Caco-2 (cell line): ENCODE measurements at regions of chr11 and their contacts with region 1.

Region 1: DNA sequence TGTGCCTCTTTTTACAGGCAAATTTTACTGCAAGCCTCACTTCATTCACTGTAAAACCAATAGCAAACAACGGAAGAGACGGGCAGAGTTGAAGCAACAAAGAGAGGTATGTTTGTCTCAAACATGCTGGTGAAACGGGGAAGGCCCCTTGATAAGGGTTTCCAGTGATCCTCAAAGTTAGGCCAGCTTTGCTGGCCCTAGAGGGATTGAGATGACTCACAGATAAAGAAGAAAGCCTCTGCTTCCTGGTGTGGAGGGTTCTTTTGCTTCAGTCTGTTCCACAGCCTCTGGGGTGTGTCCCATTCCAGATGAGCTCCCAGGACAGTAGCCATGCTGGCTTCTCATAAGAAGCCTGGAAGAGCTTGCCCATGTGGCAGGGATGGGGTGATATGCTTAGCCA is 118.9 kb upstream of the PARVA start:
- DNase-seq: peak; percentile 85 to 86
- H3K4me3 ChIP-seq: no peak overlapping the region
- H3K4me3 Mint-ChIP-seq: peak overlapping the region; percentile 42
- H3K27ac Mint-ChIP-seq: peak overlapping the region; percentile 96
- H3K4me1 ChIP-seq: peaks cover 67% of the 10 kb centered on the region
- H3K4me1 Mint-ChIP-seq: peaks cover 70% of the 10 kb centered on the region
- H3K27me3 ChIP-seq: no peaks in the 10 kb centered on the region
- H3K27me3 Mint-ChIP-seq: no peaks in the 10 kb centered on the region
- CTCF ChIP-seq: no peak

Region 2: GRCh38 chr11:12031856-12032544 is 226.5 kb before region 1 on chr11:
- CTCF ChIA-PET with region 1: no interaction called
- POLR2A ChIA-PET with region 1: no interaction called
- intact Hi-C with region 1: no loop called
- DNase-seq: no peak
- H3K4me3 ChIP-seq: no peak overlapping the region
- H3K4me3 Mint-ChIP-seq: no peak overlapping the region
- H3K27ac Mint-ChIP-seq: peak overlapping the region; percentile 63
- H3K4me1 ChIP-seq: peaks cover 9% of the 10 kb centered on the region; the same call in 1 of the 2 replicates
- H3K4me1 Mint-ChIP-seq: peaks cover 20% of the 10 kb centered on the region
- H3K27me3 ChIP-seq: no peaks in the 10 kb centered on the region
- H3K27me3 Mint-ChIP-seq: no peaks in the 10 kb centered on the region
- CTCF ChIP-seq: no peak

Region 3: DNA sequence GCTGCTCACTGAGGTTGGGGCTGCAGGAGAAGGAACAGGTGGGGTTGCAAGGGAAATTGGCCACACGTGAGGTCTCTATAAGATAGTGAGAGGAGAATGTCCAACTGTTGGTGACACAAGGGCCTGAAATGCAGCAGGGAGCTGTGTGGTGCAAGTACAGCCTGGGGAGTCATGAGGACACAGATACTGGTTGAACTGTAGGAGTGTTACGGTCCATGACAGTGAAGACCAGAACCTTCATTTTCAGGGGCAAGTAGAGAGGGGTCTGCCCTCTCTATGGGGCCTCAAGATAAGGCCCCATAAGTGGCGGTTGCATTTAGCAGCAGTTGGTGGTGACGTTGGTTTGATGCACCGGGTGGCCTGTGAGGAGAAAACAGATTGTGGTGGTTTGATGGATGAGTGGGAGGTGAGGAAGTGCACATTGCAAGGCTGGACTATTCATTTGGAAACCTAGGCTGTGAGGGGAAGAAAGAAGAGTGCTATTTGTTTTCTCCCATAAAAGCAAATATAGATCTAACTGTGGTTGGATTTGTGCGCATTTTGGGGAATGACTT is 108.7 kb before region 1 on chr11:
- CTCF ChIA-PET with region 1: no interaction called
- POLR2A ChIA-PET with region 1: no interaction called
- intact Hi-C with region 1: no loop called
- DNase-seq: no peak
- H3K4me3 ChIP-seq: no peak overlapping the region
- H3K4me3 Mint-ChIP-seq: no peak overlapping the region
- H3K27ac Mint-ChIP-seq: peak overlapping the region; percentile 77
- H3K4me1 ChIP-seq: peaks cover 46% of the 10 kb centered on the region
- H3K4me1 Mint-ChIP-seq: peaks cover 33% of the 10 kb centered on the region
- H3K27me3 ChIP-seq: no peaks in the 10 kb centered on the region
- H3K27me3 Mint-ChIP-seq: no peaks in the 10 kb centered on the region
- CTCF ChIP-seq: no peak

Region 4: GRCh38 chr11:12248338-12248737 is 10.1 kb before region 1 on chr11:
- CTCF ChIA-PET with region 1: interaction called, 3 read pairs
- POLR2A ChIA-PET with region 1: interaction called, 3 read pairs
- intact Hi-C with region 1: loop called (anchors 1 kb)
- DNase-seq: peak; percentile 97 to 99
- H3K4me3 ChIP-seq: no peak overlapping the region
- H3K4me3 Mint-ChIP-seq: peak overlapping the region; percentile 58
- H3K27ac Mint-ChIP-seq: peak overlapping the region; percentile 85
- H3K4me1 ChIP-seq: peaks cover 79% of the 10 kb centered on the region
- H3K4me1 Mint-ChIP-seq: peaks cover 43% of the 10 kb centered on the region
- H3K27me3 ChIP-seq: no peaks in the 10 kb centered on the region
- H3K27me3 Mint-ChIP-seq: no peaks in the 10 kb centered on the region
- CTCF ChIP-seq: no peak

Region 5: DNA sequence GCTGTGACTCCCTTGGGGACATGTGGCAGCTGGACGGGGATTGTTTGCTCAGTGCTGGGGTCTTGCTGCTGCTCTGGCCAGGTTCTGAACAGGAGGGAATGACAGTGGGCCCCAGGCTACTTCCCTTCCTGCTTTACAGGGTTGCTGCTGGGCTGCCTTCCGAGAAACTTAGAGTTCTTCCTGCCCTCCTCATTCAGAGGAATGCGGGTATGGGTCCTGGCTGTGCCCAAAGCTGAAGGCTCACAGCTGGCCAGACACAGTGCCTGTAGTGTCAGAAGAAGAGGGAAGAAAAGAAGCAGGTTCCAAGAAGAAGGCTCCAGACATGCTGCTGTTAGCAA is 10.6 kb after region 1 on chr11:
- CTCF ChIA-PET with region 1: no interaction called
- POLR2A ChIA-PET with region 1: no interaction called
- intact Hi-C with region 1: loop called (anchors 1 kb)
- DNase-seq: no peak
- H3K4me3 ChIP-seq: no peak overlapping the region
- H3K4me3 Mint-ChIP-seq: no peak overlapping the region
- H3K27ac Mint-ChIP-seq: no peak overlapping the region
- H3K4me1 ChIP-seq: peaks cover 36% of the 10 kb centered on the region
- H3K4me1 Mint-ChIP-seq: peaks cover 30% of the 10 kb centered on the region
- H3K27me3 ChIP-seq: no peaks in the 10 kb centered on the region
- H3K27me3 Mint-ChIP-seq: no peaks in the 10 kb centered on the region
- CTCF ChIP-seq: no peak